AG04449 (cell line): ENCODE measurements at regions of chr1 and their contacts with region 1.

Region 1: GRCh38 chr1:109877320-109877771 is 33.3 kb upstream of the CSF1 start:
- DNase-seq: peak; percentile 83
- H3K4me3 ChIP-seq: peak overlapping the region; percentile 20
- CTCF ChIP-seq: peak; percentile 47

Region 2: GRCh38 chr1:109895720-109896504 is 18.6 kb after region 1 on chr1:
- CTCF ChIA-PET with region 1: interaction called, 10 read pairs
- POLR2A ChIA-PET with region 1: interaction called, 3 read pairs
- DNase-seq: no peak
- H3K4me3 ChIP-seq: no peak overlapping the region
- CTCF ChIP-seq: no peak